ENCODE measurements at regions of chr17 and their contacts with region 1.

Region 1: GRCh38 chr17:8753976-8754440 is 4.3 kb downstream of the SPDYE4 start:
- DNase-seq: no peak
- H3K4me3 ChIP-seq: no peak overlapping the region
- H3K27ac ChIP-seq: no peak overlapping the region
- H3K4me1 ChIP-seq: 0 out of 7 replicates have a peak, but pooled peaks cover 0 to 2% (median 0%) of the 10 kb centered on the region in 4 experiments
- H3K27me3 ChIP-seq: no peaks in the 10 kb centered on the region
- CTCF ChIP-seq: peak in 2 of 3 experiments; percentile 51 to 64; a peak in 2 of 4 replicates
- EP300 ChIP-seq: no peak
- POLR2A ChIP-seq: no peak
- RAD21 ChIP-seq: peak; percentile 44 to 57

Region 2: DNA sequence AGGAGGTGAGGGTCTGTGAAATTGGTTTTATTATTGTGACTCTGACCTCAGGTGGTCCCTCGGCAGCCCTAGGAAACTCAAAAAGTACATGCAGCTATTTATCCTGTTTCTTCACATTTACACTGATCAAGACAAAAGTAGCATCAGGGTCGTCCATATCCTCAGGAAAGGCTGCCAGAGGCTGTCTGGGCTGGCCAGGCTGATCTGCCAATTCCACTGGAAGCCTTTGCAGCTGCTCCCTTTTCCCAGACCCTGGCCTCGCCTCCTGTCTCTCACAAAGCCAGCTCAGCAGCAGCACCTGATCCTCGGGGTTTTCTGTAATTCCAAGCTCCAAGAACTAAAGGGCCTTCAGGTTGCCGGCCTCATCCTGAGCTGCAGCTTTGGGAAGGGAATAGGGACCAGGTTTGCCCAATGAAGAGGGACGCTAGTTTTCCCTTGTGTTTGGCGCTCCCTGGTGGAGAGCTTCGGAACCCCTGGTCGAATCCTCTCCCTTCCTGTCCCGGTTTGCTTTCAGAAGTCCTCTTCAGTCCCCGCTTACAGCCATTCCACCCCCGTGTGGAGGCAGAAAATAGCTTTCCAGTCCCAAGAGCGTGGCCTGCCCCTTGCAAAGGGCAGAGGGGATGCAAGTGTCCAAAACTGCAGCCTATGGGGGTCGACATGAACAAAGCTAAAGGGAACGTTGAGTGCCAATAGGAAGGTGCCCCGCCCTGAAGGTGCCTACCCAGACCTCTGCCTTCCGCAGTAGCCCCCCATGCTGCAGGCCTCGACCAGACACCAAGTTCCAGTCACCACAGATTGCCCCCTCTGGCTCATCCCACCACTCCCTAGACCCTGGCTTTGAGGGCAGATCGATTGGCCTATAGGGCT is 31.8 kb after region 1 on chr17:
- CTCF ChIA-PET with region 1: interaction called, 32 read pairs
- POLR2A ChIA-PET with region 1: no interaction called
- DNase-seq: peak; percentile 78 to 99
- H3K4me3 ChIP-seq: no peak overlapping the region
- H3K27ac ChIP-seq: no peak overlapping the region
- H3K4me1 ChIP-seq: peaks cover 0 to 5% (median 3%) of the 10 kb centered on the region in 4 experiments; a peak in 5 of 7 replicates
- H3K27me3 ChIP-seq: no peaks in the 10 kb centered on the region; a peak in 2 of 7 replicates
- CTCF ChIP-seq: peak; percentile 75 to 93 (median 86)
- EP300 ChIP-seq: no peak
- POLR2A ChIP-seq: no peak
- RAD21 ChIP-seq: peak; percentile 92 to 94